ENCODE measurements at regions of chr5 and their contacts with region 1.

Region 1: GRCh38 chr5:113294311-113295110 is 140.3 kb downstream of the TSSK1B start:
- DNase-seq: peak; percentile 92
- H3K4me3 ChIP-seq: peak overlapping the region; percentile 52 to 86 (median 54)
- H3K27ac ChIP-seq: peak overlapping the region; percentile 65
- H3K4me1 ChIP-seq: peaks cover 31% of the 10 kb centered on the region
- H3K27me3 ChIP-seq: no peaks in the 10 kb centered on the region
- CTCF ChIP-seq: peak in 1 of 2 donors; percentile 24
- POLR2A ChIP-seq: peak; percentile 77

Region 2: DNA sequence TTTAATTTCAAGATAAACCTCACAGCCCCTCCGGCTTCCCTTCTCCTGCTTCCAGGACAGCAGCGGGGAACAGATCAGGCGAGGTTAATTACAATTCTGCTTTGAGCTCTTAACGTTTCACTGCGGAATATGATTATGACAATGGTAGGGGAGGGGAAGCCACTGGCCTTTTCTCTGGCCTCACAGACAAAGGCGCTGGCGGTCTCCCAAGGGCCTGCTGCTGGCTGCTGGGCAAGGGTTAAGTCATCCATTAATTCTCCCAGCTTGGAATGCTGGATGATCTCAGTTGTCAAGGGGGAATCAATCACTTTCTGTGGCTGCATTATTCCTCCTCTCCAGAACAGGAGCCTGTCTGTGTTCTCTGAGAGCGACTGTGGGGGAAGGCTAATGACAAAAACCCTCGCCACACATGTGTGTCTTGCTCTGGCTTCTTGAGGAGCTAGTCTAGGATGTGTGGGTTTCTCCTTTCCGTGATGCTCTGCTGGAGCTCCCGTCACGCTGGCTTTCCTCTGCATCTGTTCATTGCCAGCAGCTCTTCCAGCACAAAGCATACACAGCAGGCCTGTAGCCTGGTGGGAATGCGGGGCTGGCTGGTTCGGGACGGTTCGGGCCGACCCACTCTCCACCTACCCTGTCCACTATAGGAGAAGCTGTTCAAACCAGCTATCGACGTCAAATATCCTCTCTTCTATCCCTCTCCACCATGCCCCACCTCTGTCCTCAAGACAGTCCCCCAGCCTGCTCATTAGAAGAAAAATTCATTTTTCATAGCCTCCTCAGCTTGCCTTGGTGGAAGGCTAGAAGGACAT is 235.1 kb before region 1 on chr5:
- CTCF ChIA-PET with region 1: no interaction called
- POLR2A ChIA-PET with region 1: no interaction called
- dilution Hi-C with region 1: no loop called
- intact Hi-C with region 1: loop called (anchors 2 kb)
- DNase-seq: peak; percentile 87
- H3K4me3 ChIP-seq: no peak overlapping the region
- H3K27ac ChIP-seq: peak overlapping the region; percentile 81
- H3K4me1 ChIP-seq: peaks cover 16% of the 10 kb centered on the region
- H3K27me3 ChIP-seq: no peaks in the 10 kb centered on the region
- CTCF ChIP-seq: no peak
- POLR2A ChIP-seq: no peak

Region 3: GRCh38 chr5:113162770-113163169 is 131.7 kb before region 1 on chr5:
- CTCF ChIA-PET with region 1: interaction called, 4 read pairs
- POLR2A ChIA-PET with region 1: no interaction called
- dilution Hi-C with region 1: no loop called
- intact Hi-C with region 1: loop called (anchors 2 kb)
- DNase-seq: peak; percentile 45
- H3K4me3 ChIP-seq: no peak overlapping the region
- H3K27ac ChIP-seq: peak overlapping the region; percentile 10
- H3K4me1 ChIP-seq: peaks cover 32% of the 10 kb centered on the region
- H3K27me3 ChIP-seq: no peaks in the 10 kb centered on the region
- CTCF ChIP-seq: no peak
- POLR2A ChIP-seq: no peak

Region 4: DNA sequence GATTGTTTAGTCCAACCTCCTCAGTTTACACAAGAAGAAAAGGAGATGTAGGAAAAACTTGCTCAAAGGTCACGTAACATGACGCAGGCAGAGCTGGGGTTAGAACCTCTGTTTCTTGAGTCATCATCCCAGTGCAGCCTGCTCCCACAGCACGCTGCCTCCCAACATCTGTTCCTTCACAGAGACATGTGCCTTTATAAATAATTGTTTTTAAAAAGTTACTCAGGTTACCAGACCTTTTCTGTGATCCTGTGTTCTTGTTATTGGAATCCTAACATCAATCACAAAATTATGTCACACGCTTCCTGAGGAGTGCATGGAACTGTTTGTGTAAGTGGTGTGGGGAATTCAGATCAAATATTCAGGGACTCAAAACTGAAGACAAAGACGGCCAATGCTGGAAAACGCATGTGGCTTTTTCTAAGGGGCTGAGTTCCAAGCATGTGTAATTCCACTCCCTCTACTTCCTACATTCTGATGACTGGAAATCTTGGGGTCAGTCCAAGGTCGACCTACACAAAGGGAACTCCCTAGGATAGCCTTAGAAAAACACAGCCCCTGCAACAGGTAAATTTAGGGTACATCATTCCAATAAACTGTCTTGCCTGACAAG is 44.1 kb before region 1 on chr5:
- CTCF ChIA-PET with region 1: interaction called, 3 read pairs
- POLR2A ChIA-PET with region 1: no interaction called
- dilution Hi-C with region 1: no loop called
- intact Hi-C with region 1: loop called (anchors 1 kb)
- DNase-seq: peak; percentile 98
- H3K4me3 ChIP-seq: no peak overlapping the region
- H3K27ac ChIP-seq: peak overlapping the region; percentile 68
- H3K4me1 ChIP-seq: peaks cover 34% of the 10 kb centered on the region
- H3K27me3 ChIP-seq: no peaks in the 10 kb centered on the region
- CTCF ChIP-seq: no peak
- POLR2A ChIP-seq: no peak

Region 5: DNA sequence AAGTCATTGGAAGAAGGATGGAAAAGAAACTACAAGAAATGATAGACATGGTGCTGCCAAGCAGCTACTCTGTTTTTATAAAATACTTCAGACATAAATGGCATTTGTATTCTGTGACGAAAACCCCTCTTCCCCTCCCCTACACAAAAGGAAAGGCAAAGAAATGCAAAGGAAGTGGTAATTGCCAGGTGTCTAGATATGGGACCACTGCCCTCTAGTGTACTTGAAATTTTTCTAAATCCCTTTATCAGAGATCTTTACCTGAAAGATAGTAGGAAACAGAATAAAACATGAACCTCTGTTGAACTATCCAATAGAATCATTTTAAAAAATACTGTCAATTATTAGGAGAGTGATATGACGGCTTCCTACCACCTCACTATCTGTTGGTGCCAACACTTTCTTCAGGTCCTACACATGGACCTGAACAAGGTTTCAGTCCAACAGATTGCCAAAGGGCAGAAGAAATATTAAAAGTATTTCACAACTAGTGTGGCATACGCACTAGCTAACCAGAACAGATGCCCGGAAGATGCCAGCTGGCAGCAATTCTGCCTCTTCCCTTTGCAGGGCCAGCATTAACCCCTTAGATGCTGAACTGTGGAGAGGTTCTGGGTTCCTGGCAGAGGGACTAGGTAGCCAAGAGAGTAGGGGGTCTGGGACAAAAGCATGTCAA is 36.2 kb after region 1 on chr5:
- CTCF ChIA-PET with region 1: interaction called, 11 read pairs
- POLR2A ChIA-PET with region 1: no interaction called
- dilution Hi-C with region 1: no loop called
- intact Hi-C with region 1: loop called (anchors 2 kb)
- DNase-seq: peak; percentile 75
- H3K4me3 ChIP-seq: no peak overlapping the region
- H3K27ac ChIP-seq: no peak overlapping the region
- H3K4me1 ChIP-seq: peaks cover 9% of the 10 kb centered on the region
- H3K27me3 ChIP-seq: no peaks in the 10 kb centered on the region
- CTCF ChIP-seq: peak; percentile 20 to 30
- POLR2A ChIP-seq: no peak

Region 6: DNA sequence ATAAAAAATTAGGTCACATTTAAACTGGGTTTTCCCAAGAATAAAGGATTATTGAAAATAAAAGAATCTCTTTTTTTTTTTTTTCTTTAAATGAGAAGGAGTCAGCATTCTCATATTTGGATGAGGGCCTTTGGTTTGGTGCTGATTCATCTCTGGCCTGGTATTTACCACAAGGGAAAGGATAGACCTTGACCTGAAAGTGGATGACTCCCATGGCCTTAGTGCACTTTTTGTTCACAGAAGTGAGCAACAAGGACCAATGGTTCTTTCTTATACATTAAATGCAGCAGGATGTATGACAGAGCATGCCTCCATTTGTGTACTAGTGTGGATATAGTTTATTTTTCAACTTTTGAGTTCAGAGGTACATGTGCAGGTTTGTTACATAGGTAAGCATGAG is 225.9 kb after region 1 on chr5:
- CTCF ChIA-PET with region 1: no interaction called
- POLR2A ChIA-PET with region 1: no interaction called
- dilution Hi-C with region 1: no loop called
- intact Hi-C with region 1: no loop called
- DNase-seq: no peak
- H3K4me3 ChIP-seq: no peak overlapping the region
- H3K27ac ChIP-seq: no peak overlapping the region
- H3K4me1 ChIP-seq: peaks cover 15% of the 10 kb centered on the region
- H3K27me3 ChIP-seq: no peaks in the 10 kb centered on the region
- CTCF ChIP-seq: no peak
- POLR2A ChIP-seq: no peak